OCI-LY7 (cell line): ENCODE measurements at regions of chr4 and their contacts with region 1.

Region 1: DNA sequence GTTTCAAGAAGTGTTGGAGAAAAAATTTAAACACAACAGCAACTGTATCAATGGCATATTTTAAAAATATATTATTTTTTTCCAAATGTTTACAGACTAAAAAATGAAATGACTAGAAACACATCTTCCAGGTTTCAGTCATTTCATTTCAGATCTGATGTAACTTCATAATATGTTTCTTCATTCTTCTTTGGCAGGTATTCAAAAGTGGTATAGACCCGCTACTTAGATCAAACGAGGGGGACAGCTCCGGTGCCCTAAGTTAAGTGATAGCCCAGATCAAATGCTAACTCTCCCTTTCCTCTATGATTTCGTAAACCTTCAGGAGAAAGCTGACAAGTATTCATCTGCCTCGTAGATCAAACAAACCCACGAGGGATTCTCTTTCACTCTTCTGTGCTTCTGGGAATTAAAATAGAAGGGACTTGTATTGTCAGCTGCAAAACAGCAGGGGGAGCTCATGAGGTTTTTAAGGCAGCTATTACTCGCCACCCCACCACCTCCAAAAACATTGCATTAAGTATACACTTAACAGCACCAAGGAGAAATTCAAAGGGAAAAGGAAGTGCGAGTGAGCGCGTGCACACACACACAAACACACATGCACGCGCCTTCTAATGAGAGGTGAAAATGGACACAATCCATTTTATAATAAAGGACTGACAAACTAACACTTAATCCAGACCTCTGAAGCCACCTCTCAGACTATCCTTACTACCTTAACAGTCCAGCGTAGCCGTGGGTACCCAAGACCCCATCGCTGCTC is 21.4 kb downstream of the HELT start:
- DNase-seq: peak; percentile 80
- H3K4me3 ChIP-seq: peak overlapping the region; percentile 54
- H3K27ac ChIP-seq: no peak overlapping the region
- H3K4me1 ChIP-seq: peaks cover 6% of the 10 kb centered on the region
- CTCF ChIP-seq: peak; percentile 95

Region 2: GRCh38 chr4:185096032-185096653 is 56.5 kb after region 1 on chr4:
- CTCF ChIA-PET with region 1: interaction called, 4 read pairs
- POLR2A ChIA-PET with region 1: interaction called, 7 read pairs
- intact Hi-C with region 1: loop called (anchors 2 kb)
- DNase-seq: peak; percentile 60
- H3K4me3 ChIP-seq: no peak overlapping the region
- H3K27ac ChIP-seq: no peak overlapping the region
- H3K4me1 ChIP-seq: no peaks in the 10 kb centered on the region
- CTCF ChIP-seq: peak; percentile 90

Region 3: DNA sequence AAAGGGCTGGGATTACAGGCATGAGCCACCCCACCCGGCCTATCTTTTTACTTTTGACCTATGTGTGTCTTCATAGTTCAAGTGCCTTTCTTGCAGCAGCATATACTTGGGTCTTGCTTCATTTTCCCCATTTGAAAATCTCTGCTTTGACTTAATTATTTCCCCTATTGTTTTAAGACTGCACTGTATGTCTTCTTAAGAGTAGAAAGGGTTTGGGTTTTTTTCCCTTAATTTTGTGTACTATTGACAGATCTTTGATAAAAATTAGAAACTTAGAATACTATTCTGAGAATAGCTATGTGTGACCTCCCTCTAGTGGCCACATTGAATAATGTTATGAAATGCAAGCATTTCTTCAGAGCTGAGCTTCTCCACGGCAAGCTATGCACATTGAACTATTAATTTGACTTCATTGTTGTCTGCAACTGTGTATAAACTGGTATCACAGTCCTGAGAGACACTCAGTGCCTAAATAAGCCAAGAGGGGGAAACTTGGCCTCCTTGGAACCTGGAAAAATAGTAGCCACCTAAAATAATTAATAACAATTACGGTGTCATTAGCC is 94.7 kb after region 1 on chr4:
- CTCF ChIA-PET with region 1: no interaction called
- POLR2A ChIA-PET with region 1: no interaction called
- intact Hi-C with region 1: loop called (anchors 2 kb)
- DNase-seq: peak; percentile 71
- H3K4me3 ChIP-seq: no peak overlapping the region
- H3K27ac ChIP-seq: no peak overlapping the region
- H3K4me1 ChIP-seq: no peaks in the 10 kb centered on the region
- CTCF ChIP-seq: peak; percentile 96

Region 4: DNA sequence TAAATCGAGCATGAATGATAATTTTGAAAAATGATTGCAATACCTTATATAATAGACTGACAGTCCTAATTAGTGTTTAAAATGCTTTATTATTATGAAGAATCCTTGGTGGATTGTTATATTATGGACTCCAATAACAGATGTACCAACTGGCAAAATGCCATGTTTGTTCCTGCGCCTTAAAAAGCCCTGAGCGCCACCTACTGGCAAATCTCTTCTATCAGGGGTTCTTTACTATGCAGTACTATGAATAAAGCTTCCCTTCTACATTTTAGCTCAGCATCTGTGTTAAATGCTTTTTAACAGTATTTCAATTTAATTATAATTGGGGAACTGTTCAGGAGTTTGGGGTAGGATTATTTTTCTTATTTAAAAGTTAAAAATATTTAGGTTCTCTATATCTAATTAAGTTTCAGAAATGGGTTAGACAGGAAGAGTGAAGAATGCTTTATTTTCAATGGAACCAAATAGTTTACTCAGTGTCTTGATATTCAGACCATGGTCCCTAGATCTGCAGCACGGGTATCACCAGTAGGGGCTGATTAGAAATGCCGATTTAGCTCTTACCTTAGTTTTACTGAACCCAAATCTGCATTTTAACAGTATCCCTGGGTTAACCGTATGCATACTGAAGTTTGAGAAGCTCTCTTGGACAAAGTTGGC is 144.1 kb after region 1 on chr4:
- CTCF ChIA-PET with region 1: no interaction called
- POLR2A ChIA-PET with region 1: interaction called, 3 read pairs
- intact Hi-C with region 1: loop called (anchors 1 kb)
- DNase-seq: peak; percentile 85
- H3K4me3 ChIP-seq: no peak overlapping the region
- H3K27ac ChIP-seq: no peak overlapping the region
- H3K4me1 ChIP-seq: peaks cover 11% of the 10 kb centered on the region
- CTCF ChIP-seq: peak; percentile 98

Region 5: DNA sequence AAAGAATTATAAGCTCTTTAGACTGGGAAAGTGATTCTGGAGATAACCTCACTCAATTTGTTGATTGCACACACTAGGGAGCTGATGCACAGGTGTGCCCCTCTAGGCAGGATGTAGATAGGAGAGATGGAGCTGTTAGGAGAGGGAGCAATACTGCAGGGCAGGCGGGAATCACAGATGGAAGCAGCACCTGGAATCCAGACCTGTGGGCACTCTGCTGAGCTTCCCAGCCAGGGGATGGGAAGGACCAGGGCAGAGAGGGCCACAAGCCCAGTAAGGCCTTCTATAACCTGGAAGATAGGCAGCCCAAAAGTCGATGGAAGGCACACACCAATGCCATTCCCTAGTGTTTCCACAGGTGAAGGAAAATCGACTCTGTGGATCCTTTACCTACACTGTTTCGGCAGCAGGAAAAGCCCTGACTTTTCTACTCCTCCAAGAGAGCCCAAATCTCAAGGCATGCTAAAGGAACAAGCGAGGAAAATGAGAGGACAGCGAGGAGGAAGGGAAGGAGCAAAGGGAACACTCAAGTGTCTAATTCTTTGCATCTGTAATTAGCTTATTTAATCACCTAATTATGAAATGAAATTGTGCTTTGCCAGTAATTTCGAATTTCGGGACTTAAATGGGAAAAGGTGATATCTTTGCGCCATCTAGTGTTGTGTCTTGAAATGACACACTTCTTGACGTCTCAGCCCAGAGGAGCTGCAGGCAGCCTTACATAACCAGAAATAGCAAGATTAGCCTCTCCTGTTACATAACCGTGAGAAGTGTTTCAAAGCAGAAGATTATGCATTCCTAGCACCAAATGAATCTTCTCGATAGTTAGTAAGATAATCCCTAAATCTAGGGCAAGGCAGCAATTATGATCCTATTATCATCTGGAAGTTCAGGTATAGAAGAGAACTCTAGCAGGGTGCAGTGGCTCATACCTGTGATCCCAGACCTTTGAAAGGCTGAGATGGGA is 998.3 kb after region 1 on chr4:
- CTCF ChIA-PET with region 1: no interaction called
- POLR2A ChIA-PET with region 1: no interaction called
- intact Hi-C with region 1: loop called (anchors 10 kb)
- DNase-seq: peak; percentile 73
- H3K4me3 ChIP-seq: no peak overlapping the region
- H3K27ac ChIP-seq: no peak overlapping the region
- H3K4me1 ChIP-seq: no peaks in the 10 kb centered on the region
- CTCF ChIP-seq: peak; percentile 89